Left lung (tissue), 14 donors: ENCODE measurements at regions of chr5 and their contacts with region 1.

Region 1: DNA sequence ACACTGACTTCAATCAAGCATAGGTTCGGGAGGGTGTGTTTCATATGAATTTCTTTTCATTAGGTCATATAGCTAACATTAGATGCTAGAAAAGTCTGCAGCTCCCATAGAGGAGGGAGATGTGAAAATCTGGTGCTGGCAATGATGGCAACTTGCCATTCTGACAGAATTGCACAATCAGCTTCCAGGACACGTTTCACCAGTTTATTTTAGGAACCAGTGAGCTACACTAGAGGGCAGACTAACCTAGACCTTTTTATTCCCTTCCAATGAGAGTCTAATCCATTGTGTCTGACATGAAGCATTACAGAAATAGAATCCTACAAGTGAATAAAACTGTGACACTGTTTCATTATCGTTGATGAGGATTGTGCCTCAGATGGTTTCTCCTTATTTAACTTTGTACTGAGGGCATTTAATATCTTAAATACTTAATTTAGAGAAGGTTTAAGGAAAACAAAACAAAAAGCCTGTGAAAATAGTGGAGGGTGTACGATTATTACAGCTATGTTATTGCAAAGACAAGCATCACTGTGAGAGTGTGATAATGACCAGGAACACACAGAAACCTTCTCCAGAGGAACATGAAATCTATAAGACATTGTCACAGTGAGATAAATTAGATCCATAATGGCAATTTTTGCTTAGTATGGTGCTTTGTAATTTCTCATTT is 363.3 kb upstream of the RPS23 start:
- DNase-seq: peak in 3 of 4 donors; percentile 56 to 92 (median 85)
- ATAC-seq: peak; percentile 97
- H3K4me3 ChIP-seq: no peak overlapping the region
- H3K27ac ChIP-seq: peak overlapping the region in 1 of 2 donors; percentile 28
- H3K4me1 ChIP-seq: peaks cover 0 to 7% of the 10 kb centered on the region in 2 donors
- H3K27me3 ChIP-seq: no peaks in the 10 kb centered on the region
- CTCF ChIP-seq: peak; percentile 52 to 54

Region 2: DNA sequence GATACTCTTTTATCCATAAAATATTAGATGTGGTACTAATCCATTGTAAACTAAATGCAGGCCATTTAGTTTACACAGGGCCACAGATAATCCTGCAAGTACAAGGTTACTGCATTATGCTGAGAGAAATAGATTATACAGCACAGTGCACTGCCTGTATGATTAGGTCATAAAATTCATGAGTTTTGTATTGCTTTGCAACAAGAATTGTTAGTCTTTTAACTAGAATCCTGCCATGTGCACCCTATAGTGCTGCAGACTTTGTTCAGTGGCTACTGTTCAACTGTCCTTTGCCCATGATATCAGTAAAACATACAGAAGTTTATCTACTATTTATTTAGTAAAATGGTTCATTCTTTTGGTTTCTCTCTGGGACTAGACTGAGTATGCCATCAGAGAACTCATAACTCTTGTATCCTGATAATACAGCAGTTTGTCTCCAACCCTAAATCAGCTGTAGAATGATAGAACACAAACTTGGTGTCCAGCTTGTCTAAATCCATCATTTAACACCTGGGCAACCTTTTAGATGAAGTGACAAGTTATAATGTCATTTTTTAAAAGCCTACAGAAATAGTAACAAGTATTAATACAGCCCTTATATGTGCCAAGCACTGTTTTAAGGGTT is 144.5 kb after region 1 on chr5:
- intact Hi-C with region 1: loop called in 1 of 2 experiments (anchors 10 kb)
- DNase-seq: no peak
- ATAC-seq: no peak
- H3K4me3 ChIP-seq: no peak overlapping the region
- H3K27ac ChIP-seq: no peak overlapping the region
- H3K4me1 ChIP-seq: no peaks in the 10 kb centered on the region
- H3K27me3 ChIP-seq: no peaks in the 10 kb centered on the region
- CTCF ChIP-seq: no peak